Activated naive CD4-positive, alpha-beta T cell treated with anti-CD3 and anti-CD28 coated beads, Interleukin-2, amount 10 ng/mL, durations not matched to agents 7 days and 5 days (primary cell): ENCODE measurements at regions of chr1 and their contacts with region 1.

Region 1: GRCh38 chr1:155172732-155173477 is at the start of gene KRTCAP2:
- DNase-seq: peak; percentile 97
- H3K4me3 Mint-ChIP-seq: peak within 1 kb of the TSS; percentile 97
- H3K27ac Mint-ChIP-seq: peak within 1 kb of the TSS; percentile 98
- H3K4me1 Mint-ChIP-seq: peaks cover 65% of the 10 kb centered on the region
- H3K27me3 Mint-ChIP-seq: peaks cover 4% of the 10 kb centered on the region

Region 2: GRCh38 chr1:154931940-154932487 is 240.9 kb before region 1 on chr1:
- CTCF ChIA-PET with region 1: no interaction called
- DNase-seq: no peak
- H3K4me3 Mint-ChIP-seq: no peak overlapping the region
- H3K27ac Mint-ChIP-seq: no peak overlapping the region
- H3K4me1 Mint-ChIP-seq: peaks cover 28% of the 10 kb centered on the region
- H3K27me3 Mint-ChIP-seq: no peaks in the 10 kb centered on the region

Region 3: GRCh38 chr1:154998818-154999570 is 173.9 kb before region 1 on chr1:
- CTCF ChIA-PET with region 1: no interaction called
- DNase-seq: peak; percentile 76
- H3K4me3 Mint-ChIP-seq: peak overlapping the region; percentile 73
- H3K27ac Mint-ChIP-seq: peak overlapping the region; percentile 85
- H3K4me1 Mint-ChIP-seq: peaks cover 42% of the 10 kb centered on the region
- H3K27me3 Mint-ChIP-seq: peaks cover 4% of the 10 kb centered on the region

Region 4: DNA sequence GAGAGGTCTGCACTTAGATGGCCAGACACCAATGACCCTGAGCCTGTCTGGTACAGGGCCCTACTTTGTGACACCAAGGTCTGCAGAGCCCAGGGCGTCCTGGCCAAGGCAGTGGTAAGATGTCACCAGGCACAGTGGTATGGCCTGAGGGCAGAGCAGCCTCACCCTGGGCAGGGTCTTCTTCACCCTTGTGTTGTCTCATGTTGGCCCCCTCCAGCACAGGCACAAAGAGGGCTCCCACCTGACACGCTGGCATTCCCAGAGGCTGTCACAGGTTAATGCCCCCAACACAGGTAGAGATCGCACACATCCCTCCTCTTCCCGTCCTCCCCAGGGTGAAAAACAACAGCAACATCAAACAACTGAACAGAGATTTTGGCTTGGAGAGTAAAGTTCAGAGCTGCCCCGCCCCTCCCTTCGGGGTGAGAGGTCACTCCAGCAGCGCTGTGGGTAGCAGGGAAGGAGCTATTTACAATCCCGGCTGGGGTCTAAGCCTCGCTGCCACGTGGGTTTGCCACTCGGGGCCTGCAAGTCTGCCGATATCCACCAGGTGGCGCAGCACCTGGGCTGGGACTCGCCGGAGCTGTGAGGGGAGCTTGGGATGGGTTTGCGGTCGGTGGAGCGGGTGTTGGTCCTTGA is 81.7 kb before region 1 on chr1:
- CTCF ChIA-PET with region 1: interaction called, 226 read pairs
- DNase-seq: peak; percentile 86
- H3K4me3 Mint-ChIP-seq: no peak overlapping the region
- H3K27ac Mint-ChIP-seq: no peak overlapping the region
- H3K4me1 Mint-ChIP-seq: peaks cover 7% of the 10 kb centered on the region
- H3K27me3 Mint-ChIP-seq: peaks cover 57% of the 10 kb centered on the region

Region 5: GRCh38 chr1:155193275-155193990 is 20.5 kb after region 1 on chr1:
- CTCF ChIA-PET with region 1: interaction called, 56 read pairs
- DNase-seq: peak; percentile 81
- H3K4me3 Mint-ChIP-seq: peak overlapping the region; percentile 83
- H3K27ac Mint-ChIP-seq: peak overlapping the region; percentile 99
- H3K4me1 Mint-ChIP-seq: peaks cover 39% of the 10 kb centered on the region
- H3K27me3 Mint-ChIP-seq: no peaks in the 10 kb centered on the region

Region 6: GRCh38 chr1:155227261-155228095 is 54.6 kb after region 1 on chr1:
- CTCF ChIA-PET with region 1: interaction called, 52 read pairs
- DNase-seq: peak; percentile 100
- H3K4me3 Mint-ChIP-seq: peak overlapping the region; percentile 88
- H3K27ac Mint-ChIP-seq: peak overlapping the region; percentile 90
- H3K4me1 Mint-ChIP-seq: peaks cover 38% of the 10 kb centered on the region
- H3K27me3 Mint-ChIP-seq: peaks cover 4% of the 10 kb centered on the region